ENCODE measurements at regions of chr3 and their contacts with region 1.

Region 1: DNA sequence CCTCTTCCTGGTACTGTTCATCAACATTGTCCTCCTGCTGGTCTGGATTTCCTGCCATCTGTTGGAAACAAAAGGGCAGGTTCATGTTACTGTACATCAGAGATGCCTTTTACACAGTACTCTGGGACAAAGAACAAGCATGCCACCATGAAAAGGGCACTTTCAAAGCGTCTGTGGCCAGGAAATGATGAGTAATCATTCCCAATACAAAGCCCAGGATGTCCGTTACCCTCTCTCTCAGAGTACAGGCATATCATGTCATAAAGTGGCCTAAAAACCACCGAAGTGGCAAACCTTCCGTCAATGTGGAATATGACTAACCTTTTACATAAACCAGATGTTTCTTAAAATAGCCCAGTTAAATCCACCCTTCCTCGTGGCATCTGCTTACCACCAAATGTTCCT is 71.2 kb downstream of the GOLIM4 start:
- DNase-seq: peak; percentile 10
- H3K4me3 Mint-ChIP-seq: peak overlapping the region; percentile 49
- H3K27ac Mint-ChIP-seq: peak overlapping the region; percentile 97
- H3K4me1 Mint-ChIP-seq: peaks cover 55% of the 10 kb centered on the region
- H3K27me3 Mint-ChIP-seq: no peaks in the 10 kb centered on the region

Region 2: DNA sequence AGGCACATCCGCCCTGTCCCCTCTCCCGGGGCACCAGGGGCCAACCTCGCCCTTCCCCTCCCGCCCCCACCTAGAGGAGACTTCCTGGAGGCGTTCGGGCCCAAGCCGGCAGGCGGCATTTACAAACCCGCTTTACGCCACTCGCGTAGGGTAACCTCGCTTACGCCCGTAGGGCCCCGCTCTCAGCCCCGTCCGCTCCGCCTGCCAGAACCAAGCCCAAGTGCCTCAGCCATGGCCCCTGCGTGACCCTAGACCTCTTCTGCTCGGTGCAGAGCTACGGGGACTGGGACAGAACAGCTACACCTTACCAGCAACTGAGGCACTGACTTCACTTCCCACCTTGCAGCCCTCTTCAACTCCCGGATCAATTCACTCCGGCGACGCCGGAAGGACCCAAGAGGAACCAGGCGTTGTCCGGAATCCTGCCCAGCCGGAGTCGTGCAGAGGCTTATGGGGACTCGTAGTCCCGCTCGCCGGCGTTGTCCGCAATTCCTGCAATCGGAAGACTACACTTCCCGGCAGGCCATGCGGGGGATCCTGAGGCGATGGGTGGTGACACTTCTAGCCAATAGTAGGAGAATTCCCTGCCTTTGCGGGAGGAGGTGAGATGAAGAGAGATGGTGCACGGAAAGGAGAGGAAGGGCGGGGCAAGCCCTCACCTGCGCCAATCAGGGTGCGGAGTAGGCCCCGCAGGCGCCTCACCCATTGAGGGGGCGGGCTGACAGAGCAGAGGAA is 289.9 kb before region 1 on chr3 and contains the start of gene PDCD10:
- intact Hi-C with region 1: loop called (anchors 10 kb)
- DNase-seq: peak; percentile 95
- H3K4me3 Mint-ChIP-seq: no peak within 1 kb of the TSS
- H3K27ac Mint-ChIP-seq: no peak within 1 kb of the TSS
- H3K4me1 Mint-ChIP-seq: peaks cover 16% of the 10 kb centered on the region
- H3K27me3 Mint-ChIP-seq: peaks cover 7% of the 10 kb centered on the region
- total RNA-seq, gene PDCD10: 73.8 and 80.9 TPM in 2 replicates

Region 3: GRCh38 chr3:168002786-168003368 is 21.7 kb before region 1 on chr3:
- intact Hi-C with region 1: loop called (anchors 1 kb)
- DNase-seq: no peak
- H3K4me3 Mint-ChIP-seq: no peak overlapping the region
- H3K27ac Mint-ChIP-seq: no peak overlapping the region
- H3K4me1 Mint-ChIP-seq: peaks cover 4% of the 10 kb centered on the region
- H3K27me3 Mint-ChIP-seq: no peaks in the 10 kb centered on the region

Region 4: GRCh38 chr3:168061332-168061996 is 36.9 kb after region 1 on chr3:
- intact Hi-C with region 1: loop called (anchors 1 kb)
- DNase-seq: no peak
- H3K4me3 Mint-ChIP-seq: peak overlapping the region; percentile 55
- H3K27ac Mint-ChIP-seq: peak overlapping the region; percentile 65
- H3K4me1 Mint-ChIP-seq: peaks cover 26% of the 10 kb centered on the region
- H3K27me3 Mint-ChIP-seq: peaks cover 1% of the 10 kb centered on the region

Measured in activated T-helper 2 cell treated with anti-CD3 and anti-CD28 coated beads, Interferon-gamma antibody, Interleukin-2, Interleukin-4, amounts not matched to agents 10 μg/mL and 5 μg/mL and 100 μg/mL, durations not matched to agents 14 hours and 24 hours and 36 hours (primary cell).